ENCODE measurements at regions of chr1 and their contacts with region 1.

Region 1: DNA sequence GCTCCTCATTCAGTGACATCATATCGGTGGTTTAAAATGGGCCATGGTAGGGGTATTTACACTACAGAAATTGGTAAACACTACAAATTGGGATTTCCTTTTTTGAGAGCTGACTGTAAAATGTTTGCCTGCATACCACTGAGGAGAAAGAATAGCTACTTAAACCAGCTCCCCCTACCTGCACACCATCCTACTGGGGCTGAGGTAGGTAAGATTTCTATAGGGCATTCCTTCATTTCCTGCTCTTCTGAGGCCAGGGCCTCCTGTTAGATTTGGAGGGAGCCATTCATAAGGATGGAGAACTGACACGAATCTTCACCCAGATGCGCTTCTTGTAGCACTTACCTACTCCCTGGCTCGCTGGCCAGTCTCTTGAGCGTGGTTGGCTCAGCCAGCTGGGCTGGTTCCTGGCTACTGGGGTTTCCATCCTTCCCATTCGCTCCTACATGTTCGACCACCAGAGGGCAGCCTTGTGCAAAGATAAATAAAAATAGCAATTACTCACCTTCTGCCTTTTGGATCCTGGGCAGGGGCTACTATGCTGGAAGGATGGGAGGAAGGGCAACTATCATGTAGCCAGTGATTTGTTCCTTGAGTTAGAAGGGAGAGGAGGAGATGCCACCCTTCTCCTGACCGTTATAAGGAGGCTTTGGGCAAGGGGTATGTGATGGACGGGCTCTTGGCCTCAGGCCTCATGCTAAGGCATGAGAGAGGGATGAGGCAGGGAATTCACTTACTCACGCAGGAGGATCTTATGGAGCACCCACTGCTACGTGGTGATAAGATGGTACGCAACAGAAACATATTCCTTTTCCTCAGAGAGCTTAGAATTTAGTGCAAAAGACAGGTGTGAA is 10.7 kb downstream of the OPTC start:
- DNase-seq: peak in 1 of 2 experiments; percentile 90
- H3K4me3 ChIP-seq: no peak overlapping the region
- H3K27ac ChIP-seq: no peak overlapping the region
- H3K4me1 ChIP-seq: peaks cover 2 to 17% (median 11%) of the 10 kb centered on the region in 4 experiments
- H3K27me3 ChIP-seq: no peaks in the 10 kb centered on the region
- CTCF ChIP-seq: peak; percentile 60 to 87 (median 78)
- EP300 ChIP-seq: no peak
- POLR2A ChIP-seq: no peak
- RAD21 ChIP-seq: peak; percentile 94 to 95

Region 2: GRCh38 chr1:203216274-203217138 is 288.1 kb before region 1 on chr1:
- CTCF ChIA-PET with region 1: no interaction called
- POLR2A ChIA-PET with region 1: no interaction called
- DNase-seq: peak; percentile 71 to 86
- H3K4me3 ChIP-seq: peak overlapping the region in 2 of 4 experiments; percentile 17 to 40; a peak in 3 of 8 replicates
- H3K27ac ChIP-seq: no peak overlapping the region
- H3K4me1 ChIP-seq: peaks cover 0 to 12% (median 11%) of the 10 kb centered on the region in 4 experiments; a peak in 6 of 7 replicates
- H3K27me3 ChIP-seq: no peaks in the 10 kb centered on the region
- CTCF ChIP-seq: peak; percentile 29 to 85 (median 78)
- EP300 ChIP-seq: no peak
- POLR2A ChIP-seq: no peak
- RAD21 ChIP-seq: peak; percentile 87 to 91

Region 3: DNA sequence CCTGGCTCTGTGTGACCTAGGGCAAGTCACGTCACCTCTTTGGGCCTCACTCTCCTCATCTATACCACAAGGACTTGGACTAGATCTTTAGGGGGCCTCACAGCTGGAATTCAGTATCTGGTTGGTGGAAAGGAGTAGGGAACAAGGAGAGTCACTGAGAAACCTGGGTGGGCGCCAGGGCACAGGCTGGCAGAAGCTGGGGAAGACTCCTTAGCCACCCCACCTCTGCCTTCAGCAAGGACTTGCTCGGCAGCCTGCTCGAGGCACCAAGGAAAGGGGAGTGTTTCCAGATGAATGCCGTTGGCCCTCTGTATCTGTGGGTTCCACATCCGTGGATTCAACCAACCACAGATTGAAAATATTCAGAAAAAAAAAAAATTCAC is 11.9 kb before region 1 on chr1:
- CTCF ChIA-PET with region 1: interaction called, 44 read pairs
- POLR2A ChIA-PET with region 1: interaction called, 3 read pairs
- DNase-seq: no peak
- H3K4me3 ChIP-seq: no peak overlapping the region
- H3K27ac ChIP-seq: no peak overlapping the region
- H3K4me1 ChIP-seq: peaks cover 0 to 15% (median 6%) of the 10 kb centered on the region in 4 experiments; a peak in 5 of 7 replicates
- H3K27me3 ChIP-seq: no peaks in the 10 kb centered on the region; a peak in 1 of 7 replicates
- CTCF ChIP-seq: no peak
- EP300 ChIP-seq: no peak
- POLR2A ChIP-seq: no peak
- RAD21 ChIP-seq: no peak

Region 4: GRCh38 chr1:203558064-203558760 is 53.6 kb after region 1 on chr1:
- CTCF ChIA-PET with region 1: interaction called, 13 read pairs
- POLR2A ChIA-PET with region 1: interaction called, 4 read pairs
- DNase-seq: no peak
- H3K4me3 ChIP-seq: no peak overlapping the region
- H3K27ac ChIP-seq: no peak overlapping the region
- H3K4me1 ChIP-seq: peaks cover 4 to 18% (median 15%) of the 10 kb centered on the region in 4 experiments
- H3K27me3 ChIP-seq: no peaks in the 10 kb centered on the region
- CTCF ChIP-seq: no peak
- EP300 ChIP-seq: no peak
- POLR2A ChIP-seq: no peak
- RAD21 ChIP-seq: no peak

Region 5: DNA sequence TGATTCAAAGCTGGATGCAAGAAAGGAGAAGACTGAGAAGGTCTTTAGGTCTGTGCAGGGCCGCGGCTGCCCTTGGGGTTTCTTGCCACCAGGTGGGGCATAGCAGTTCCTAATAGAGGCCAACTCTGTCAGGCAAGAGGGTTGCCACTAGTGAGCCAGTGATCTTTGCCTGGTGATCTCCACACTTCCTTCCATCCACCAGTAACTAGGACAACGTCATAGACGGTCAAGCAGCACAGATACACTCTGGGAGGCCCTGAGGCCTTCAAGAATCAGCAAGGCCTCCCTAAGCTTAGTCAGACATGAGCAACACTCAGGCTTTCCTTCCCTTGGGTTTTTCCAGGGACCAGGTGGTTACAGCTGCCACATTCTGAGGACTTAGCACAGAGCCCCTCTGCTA is 89.1 kb after region 1 on chr1:
- CTCF ChIA-PET with region 1: interaction called, 27 read pairs
- POLR2A ChIA-PET with region 1: no interaction called
- DNase-seq: peak in 1 of 2 experiments; percentile 63
- H3K4me3 ChIP-seq: no peak overlapping the region
- H3K27ac ChIP-seq: no peak overlapping the region
- H3K4me1 ChIP-seq: peaks cover 18 to 28% (median 23%) of the 10 kb centered on the region in 4 experiments
- H3K27me3 ChIP-seq: no peaks in the 10 kb centered on the region
- CTCF ChIP-seq: peak; percentile 59 to 63 (median 59)
- EP300 ChIP-seq: no peak
- POLR2A ChIP-seq: no peak
- RAD21 ChIP-seq: peak; percentile 55 to 66

Region 6: DNA sequence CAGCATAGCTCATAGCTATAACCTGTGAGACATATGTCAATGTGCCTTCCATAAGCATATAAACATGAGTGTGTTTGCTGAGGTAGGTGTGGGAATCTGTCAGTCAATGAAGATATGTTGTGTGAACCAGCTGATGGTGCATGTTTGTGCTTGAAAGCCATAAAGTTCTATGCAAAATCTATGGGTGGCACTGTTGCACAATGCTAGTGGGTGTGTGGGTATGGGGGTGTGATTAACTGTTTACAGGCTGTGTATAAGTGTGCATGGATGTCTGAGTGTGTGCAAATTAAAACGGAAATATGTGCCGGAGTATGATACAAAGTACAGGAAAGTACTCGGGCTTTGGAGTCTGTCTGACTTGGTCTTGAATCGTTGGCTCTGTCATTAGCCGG is 121.0 kb after region 1 on chr1:
- CTCF ChIA-PET with region 1: interaction called, 26 read pairs
- POLR2A ChIA-PET with region 1: no interaction called
- DNase-seq: no peak
- H3K4me3 ChIP-seq: no peak overlapping the region
- H3K27ac ChIP-seq: no peak overlapping the region
- H3K4me1 ChIP-seq: peaks cover 8 to 25% (median 17%) of the 10 kb centered on the region in 4 experiments
- H3K27me3 ChIP-seq: peaks cover 3 to 23% (median 9%) of the 10 kb centered on the region in 4 experiments
- CTCF ChIP-seq: no peak
- EP300 ChIP-seq: no peak
- POLR2A ChIP-seq: no peak
- RAD21 ChIP-seq: peak; percentile 25 to 27; a peak in 3 of 4 replicates

Measured in H1 (cell line).